ENCODE measurements at regions of chr2 and their contacts with region 1.

Region 1: GRCh38 chr2:145752091-145752806 is 1232.3 kb upstream of the ZEB2 start:
- DNase-seq: peak; percentile 14
- CTCF ChIP-seq: peak; percentile 66

Region 2: GRCh38 chr2:145736871-145737270 is 15.4 kb before region 1 on chr2:
- CTCF ChIA-PET with region 1: interaction called, 13 read pairs
- POLR2A ChIA-PET with region 1: no interaction called
- DNase-seq: no peak
- CTCF ChIP-seq: no peak

Region 3: DNA sequence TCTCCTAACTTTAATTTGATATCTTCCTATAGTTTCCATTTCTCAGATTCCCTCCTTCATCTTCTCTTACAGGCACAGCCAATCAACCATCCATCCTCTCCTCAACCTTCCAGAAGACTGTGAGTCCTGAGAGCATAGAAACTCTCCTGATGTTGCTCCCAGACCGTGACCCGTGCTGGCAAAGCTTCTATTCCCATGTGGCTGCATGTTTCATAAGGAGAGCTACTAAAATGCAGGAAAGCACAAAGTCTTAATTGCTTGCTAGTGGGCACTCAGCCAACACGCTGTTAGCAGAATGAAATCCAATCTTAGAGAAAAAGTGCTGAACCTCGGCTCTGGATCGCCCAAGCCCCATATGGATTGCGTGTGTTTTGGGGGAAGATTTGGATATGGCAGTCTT is 12.4 kb after region 1 on chr2:
- CTCF ChIA-PET with region 1: interaction called, 22 read pairs
- POLR2A ChIA-PET with region 1: no interaction called
- DNase-seq: no peak
- CTCF ChIP-seq: no peak

Measured in GM10248 (cell line).